Sigmoid colon (tissue), 7 donors: ENCODE measurements at regions of chr2 and their contacts with region 1.

Region 1: GRCh38 chr2:73892631-73893329 is at the start of gene ACTG2:
- DNase-seq: peak; percentile 94
- H3K4me3 ChIP-seq: peak within 1 kb of the TSS; percentile 58 to 79 (median 75)
- H3K27ac ChIP-seq: peak within 1 kb of the TSS; percentile 90 to 99 (median 94)
- H3K4me1 ChIP-seq: peaks cover 0 to 47% (median 41%) of the 10 kb centered on the region in 4 donors
- H3K27me3 ChIP-seq: no peaks in the 10 kb centered on the region
- CTCF ChIP-seq: no peak
- EP300 ChIP-seq: peak; percentile 35 to 90 (median 70)
- POLR2A ChIP-seq: peak; percentile 87 to 97
- total RNA-seq, gene ACTG2: 3,612 to 10,290 (median 5,643) TPM

Region 2: GRCh38 chr2:73260034-73260984 is 632.5 kb before region 1 on chr2:
- intact Hi-C with region 1: no loop called
- DNase-seq: no peak
- H3K4me3 ChIP-seq: no peak overlapping the region
- H3K27ac ChIP-seq: no peak overlapping the region
- H3K4me1 ChIP-seq: no peaks in the 10 kb centered on the region
- H3K27me3 ChIP-seq: peaks cover 0 to 5% (median 0%) of the 10 kb centered on the region in 3 donors
- CTCF ChIP-seq: no peak
- EP300 ChIP-seq: no peak
- POLR2A ChIP-seq: no peak

Region 3: DNA sequence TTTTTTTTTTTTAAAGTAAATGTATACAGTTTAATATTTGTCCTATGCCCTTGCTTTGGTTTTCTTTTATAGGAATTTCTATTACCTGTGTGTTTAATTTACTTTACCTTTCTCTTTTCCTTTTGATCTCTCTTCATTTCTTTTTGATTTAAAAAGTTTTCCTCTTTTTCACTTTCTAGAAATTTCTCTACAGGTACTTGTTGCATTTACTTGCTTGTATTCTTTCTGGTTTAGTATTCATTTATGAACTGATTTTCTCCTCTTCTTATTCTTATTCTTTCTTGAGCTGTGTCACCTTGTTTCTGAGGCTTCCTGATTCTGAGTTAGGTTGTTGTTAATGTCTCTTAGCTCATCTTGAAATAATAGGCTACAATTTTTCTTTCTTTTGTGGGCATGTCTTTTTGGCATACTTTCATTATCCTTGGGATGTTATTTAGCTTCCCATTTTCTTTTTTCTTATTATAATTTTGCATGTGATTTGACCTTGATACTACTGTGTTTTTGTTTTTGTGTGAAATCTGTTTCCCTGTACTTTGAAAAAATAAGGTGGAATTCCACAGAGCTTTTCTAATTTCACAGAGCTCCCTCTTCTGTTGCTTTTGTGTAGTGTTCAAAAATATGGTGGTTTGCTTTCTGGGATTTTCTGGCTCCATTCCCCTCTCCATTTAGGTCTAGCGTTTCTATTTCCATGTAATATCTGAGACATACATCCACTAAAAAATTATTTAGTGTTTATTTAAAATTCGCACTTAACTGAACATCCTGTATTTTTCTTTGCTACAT is 532.7 kb before region 1 on chr2:
- intact Hi-C with region 1: no loop called
- DNase-seq: no peak
- H3K4me3 ChIP-seq: no peak overlapping the region
- H3K27ac ChIP-seq: no peak overlapping the region
- H3K4me1 ChIP-seq: no peaks in the 10 kb centered on the region
- H3K27me3 ChIP-seq: no peaks in the 10 kb centered on the region
- CTCF ChIP-seq: peak in 1 of 4 experiments; percentile 11
- EP300 ChIP-seq: no peak
- POLR2A ChIP-seq: no peak

Region 4: DNA sequence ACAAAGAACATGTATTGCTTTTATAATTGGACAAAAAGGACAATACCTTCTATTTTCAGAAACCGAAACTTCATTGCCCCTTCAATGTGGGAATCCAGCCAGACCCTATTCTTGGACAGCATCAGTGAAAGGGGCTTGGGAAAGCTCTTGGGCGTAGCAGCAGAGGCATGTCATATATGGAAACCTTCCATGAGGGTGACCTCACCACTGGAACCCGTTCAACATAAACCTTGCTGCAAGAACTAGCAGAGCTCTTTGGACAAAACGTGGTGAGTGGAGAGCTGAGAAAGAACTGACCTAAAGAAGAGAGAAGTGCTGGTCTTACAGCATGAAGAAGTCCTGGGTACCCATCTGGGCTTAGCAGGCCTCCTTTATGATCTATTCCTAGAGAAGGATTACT is 22.7 kb before region 1 on chr2:
- intact Hi-C with region 1: loop called (anchors 2 kb)
- DNase-seq: peak; percentile 92
- H3K4me3 ChIP-seq: no peak overlapping the region
- H3K27ac ChIP-seq: peak overlapping the region; percentile 85 to 94 (median 86)
- H3K4me1 ChIP-seq: peaks cover 0 to 44% (median 39%) of the 10 kb centered on the region in 4 donors
- H3K27me3 ChIP-seq: no peaks in the 10 kb centered on the region
- CTCF ChIP-seq: no peak
- EP300 ChIP-seq: peak in 1 of 4 donors; percentile 18
- POLR2A ChIP-seq: no peak

Region 5: DNA sequence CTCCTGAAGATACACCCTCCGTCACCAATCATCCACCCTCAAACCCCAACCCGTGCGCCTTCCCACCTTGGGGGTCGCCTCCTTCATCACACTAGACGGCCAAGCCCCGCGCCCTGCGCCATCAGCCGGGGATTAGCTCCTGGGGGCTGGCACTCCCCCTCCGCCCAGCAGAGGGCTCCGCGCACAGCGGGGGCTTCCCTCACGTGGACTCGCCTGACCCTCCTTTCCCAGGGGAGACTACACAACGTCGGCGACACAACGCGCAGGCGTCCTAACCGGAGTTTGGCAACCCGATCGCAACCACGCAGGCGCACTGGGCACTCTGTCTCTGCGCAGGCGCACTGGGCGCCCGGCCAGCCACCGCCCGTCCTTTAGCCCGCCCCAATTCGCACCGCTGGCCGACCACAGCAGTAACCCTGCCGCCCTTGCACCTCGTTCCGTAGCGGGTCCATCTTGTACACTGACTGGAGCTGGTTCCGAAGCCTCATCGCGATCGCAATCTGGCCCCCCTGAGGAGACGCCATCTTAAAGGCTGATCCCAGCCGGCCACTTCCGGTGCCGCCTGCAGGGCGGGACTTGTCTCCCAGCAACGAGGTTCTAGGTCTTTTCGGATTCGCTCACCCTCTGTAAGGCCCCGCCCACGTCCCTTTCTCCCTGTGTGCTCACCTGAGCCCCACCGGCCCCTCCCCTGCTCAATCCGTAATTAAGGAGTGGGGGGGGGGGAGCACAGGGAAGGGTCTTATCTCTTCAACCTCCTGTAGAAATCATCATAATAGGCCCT is 614.6 kb after region 1 on chr2 and contains the start of gene PCGF1:
- intact Hi-C with region 1: no loop called
- DNase-seq: peak; percentile 99
- H3K4me3 ChIP-seq: peak within 1 kb of the TSS; percentile 60 to 87 (median 76)
- H3K27ac ChIP-seq: peak within 1 kb of the TSS; percentile 96 to 99 (median 97)
- H3K4me1 ChIP-seq: peaks cover 0 to 46% (median 37%) of the 10 kb centered on the region in 4 donors
- H3K27me3 ChIP-seq: peaks cover 6 to 75% (median 34%) of the 10 kb centered on the region in 3 donors
- CTCF ChIP-seq: peak in 2 of 4 experiments; percentile 12 to 17
- EP300 ChIP-seq: no peak
- POLR2A ChIP-seq: no peak
- total RNA-seq, gene PCGF1: 8.9 to 22.8 (median 16.0) TPM